ENCODE measurements at regions of chr16 and their contacts with region 1.

Region 1: DNA sequence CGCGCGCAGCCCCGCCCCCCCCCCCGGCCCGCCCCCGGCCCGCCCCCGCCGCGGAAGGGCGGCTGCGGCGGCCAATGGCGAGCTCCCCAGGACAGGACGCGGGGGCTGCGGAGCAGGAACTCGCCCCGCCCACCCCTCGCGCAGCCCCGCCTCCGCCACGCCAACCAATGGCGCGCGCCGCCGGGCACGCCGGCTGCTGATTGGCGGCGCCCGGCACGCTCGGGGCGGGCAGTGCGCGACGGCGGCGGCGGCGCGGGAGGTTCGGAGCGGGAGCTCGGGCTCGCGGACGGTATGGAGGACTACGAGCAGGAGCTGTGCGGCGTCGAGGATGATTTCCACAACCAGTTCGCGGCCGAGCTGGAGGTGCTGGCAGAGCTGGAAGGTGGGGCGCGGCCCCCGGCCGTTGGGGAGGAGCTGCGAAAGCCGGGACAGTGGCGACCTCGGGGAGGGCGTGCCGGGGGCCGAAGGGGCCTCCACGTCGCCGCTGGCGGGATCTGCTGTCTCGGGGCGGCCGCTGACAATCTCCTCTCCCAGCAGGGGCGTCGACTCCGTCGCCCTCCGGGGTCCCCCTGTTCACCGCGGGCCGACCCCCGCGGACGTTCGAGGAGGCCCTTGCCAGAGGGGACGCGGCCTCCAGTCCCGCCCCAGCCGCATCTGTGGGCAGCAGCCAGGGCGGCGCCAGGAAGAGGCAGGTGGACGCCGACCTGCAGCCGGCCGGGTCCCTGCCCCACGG is at the start of gene CHTF18:
- DNase-seq: peak; percentile 88 to 94
- H3K4me3 ChIP-seq: peak within 1 kb of the TSS; percentile 97
- H3K4me3 Mint-ChIP-seq: peak within 1 kb of the TSS; percentile 82
- H3K27ac Mint-ChIP-seq: no peak within 1 kb of the TSS
- H3K4me1 ChIP-seq: peaks cover 11% of the 10 kb centered on the region; the same call in 1 of the 2 replicates
- H3K4me1 Mint-ChIP-seq: no peaks in the 10 kb centered on the region
- H3K27me3 ChIP-seq: no peaks in the 10 kb centered on the region
- H3K27me3 Mint-ChIP-seq: no peaks in the 10 kb centered on the region
- CTCF ChIP-seq: no peak
- total RNA-seq, gene CHTF18: 97.6 and 102 TPM in 2 replicates

Region 2: DNA sequence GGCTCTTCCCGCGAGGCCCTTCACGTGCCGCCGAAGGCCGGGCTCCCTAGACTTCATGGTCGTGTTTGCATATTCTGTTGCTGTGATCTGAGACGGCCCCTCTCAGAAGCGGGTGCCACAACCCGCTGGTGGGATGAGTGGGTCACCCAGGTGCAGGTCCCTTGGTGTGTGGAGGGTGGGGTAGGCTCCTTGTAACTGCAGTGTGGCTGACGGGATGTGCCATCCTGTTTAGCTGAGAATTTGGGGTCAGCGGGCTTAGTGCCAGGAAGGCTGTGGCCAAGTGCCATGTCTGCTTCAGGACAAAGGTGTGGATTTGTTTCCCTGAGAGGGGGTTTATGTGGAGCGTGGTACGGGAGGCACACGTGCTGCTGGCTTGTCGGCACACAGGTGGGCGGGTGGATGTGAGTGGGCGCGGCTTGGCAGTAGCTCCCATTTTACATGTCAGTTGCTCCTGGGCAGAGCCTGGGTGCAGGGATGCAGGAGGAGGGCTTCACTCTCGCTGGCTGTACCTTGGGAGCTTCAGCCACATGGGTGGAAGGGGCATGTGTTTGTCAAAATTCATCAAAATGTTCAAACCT is 166.9 kb before region 1 on chr16:
- CTCF ChIA-PET with region 1: no interaction called
- POLR2A ChIA-PET with region 1: no interaction called
- intact Hi-C with region 1: no loop called
- DNase-seq: no peak
- H3K4me3 ChIP-seq: no peak overlapping the region
- H3K4me3 Mint-ChIP-seq: no peak overlapping the region
- H3K27ac Mint-ChIP-seq: no peak overlapping the region
- H3K4me1 ChIP-seq: no peaks in the 10 kb centered on the region
- H3K4me1 Mint-ChIP-seq: no peaks in the 10 kb centered on the region
- H3K27me3 ChIP-seq: no peaks in the 10 kb centered on the region
- H3K27me3 Mint-ChIP-seq: no peaks in the 10 kb centered on the region
- CTCF ChIP-seq: no peak

Region 3: GRCh38 chr16:636206-637080 is 152.1 kb before region 1 on chr16 and contains the start of gene METTL26:
- CTCF ChIA-PET with region 1: no interaction called
- POLR2A ChIA-PET with region 1: no interaction called
- intact Hi-C with region 1: no loop called
- DNase-seq: peak; percentile 92 to 95
- H3K4me3 ChIP-seq: peak within 1 kb of the TSS; percentile 73
- H3K4me3 Mint-ChIP-seq: peak within 1 kb of the TSS; percentile 93
- H3K27ac Mint-ChIP-seq: peak within 1 kb of the TSS; percentile 98
- H3K4me1 ChIP-seq: peaks cover 10% of the 10 kb centered on the region
- H3K4me1 Mint-ChIP-seq: no peaks in the 10 kb centered on the region
- H3K27me3 ChIP-seq: no peaks in the 10 kb centered on the region
- H3K27me3 Mint-ChIP-seq: no peaks in the 10 kb centered on the region
- CTCF ChIP-seq: peak in 1 of 2 experiments; percentile 3
- total RNA-seq, gene METTL26: 67.1 and 67.4 TPM in 2 replicates

Region 4: DNA sequence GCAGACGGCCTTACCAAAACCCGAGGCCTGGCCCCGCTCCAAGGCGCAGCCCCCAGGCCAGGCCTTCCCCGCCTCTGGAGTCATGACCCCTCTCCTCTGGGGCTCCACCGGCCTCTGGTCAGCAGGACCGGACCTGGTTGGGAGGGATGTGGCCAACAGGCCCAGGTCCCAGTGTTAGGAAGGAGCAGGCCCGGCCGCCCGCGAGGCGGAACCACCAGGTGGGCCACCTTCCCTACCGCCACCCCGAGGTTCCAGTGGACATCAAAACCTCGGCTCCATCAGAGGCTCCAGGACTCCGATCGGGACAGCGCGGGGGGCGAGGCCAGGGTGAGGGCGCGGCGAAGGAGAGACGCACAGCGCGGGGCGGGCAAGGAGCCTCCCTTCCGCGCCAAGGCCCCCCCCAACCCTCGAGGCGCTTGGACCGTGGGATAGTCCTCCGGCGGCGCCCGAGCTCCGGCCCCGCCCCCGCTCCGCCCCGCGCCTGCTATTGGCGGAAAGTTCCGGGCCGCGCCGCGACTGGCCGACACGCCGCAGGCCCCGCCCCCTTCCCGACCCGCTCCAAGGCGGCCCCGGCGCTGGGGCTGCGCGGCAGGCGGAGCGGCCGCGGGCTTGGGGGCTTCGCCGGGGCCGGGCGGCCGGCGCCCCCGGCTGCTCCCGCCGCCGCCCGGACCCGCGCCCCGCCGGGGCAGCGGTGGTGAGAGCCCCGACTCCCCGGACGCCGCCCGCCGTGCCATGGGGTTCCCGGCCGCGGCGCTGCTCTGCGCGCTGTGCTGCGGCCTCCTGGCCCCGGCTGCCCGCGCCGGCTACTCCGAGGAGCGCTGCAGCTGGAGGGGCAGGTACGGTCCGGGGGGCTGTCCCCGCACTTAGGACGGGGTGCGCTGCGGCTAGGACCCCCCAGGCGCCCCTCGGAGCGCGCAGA is 73.7 kb before region 1 on chr16 and contains the start of gene METRN:
- CTCF ChIA-PET with region 1: interaction called, 6 read pairs
- POLR2A ChIA-PET with region 1: interaction called, 12 read pairs
- intact Hi-C with region 1: loop called (anchors 10 kb)
- DNase-seq: peak; percentile 84 to 94
- H3K4me3 ChIP-seq: peak within 1 kb of the TSS; percentile 71
- H3K4me3 Mint-ChIP-seq: peak within 1 kb of the TSS; percentile 66
- H3K27ac Mint-ChIP-seq: no peak within 1 kb of the TSS
- H3K4me1 ChIP-seq: peaks cover 31% of the 10 kb centered on the region
- H3K4me1 Mint-ChIP-seq: peaks cover 7% of the 10 kb centered on the region
- H3K27me3 ChIP-seq: no peaks in the 10 kb centered on the region
- H3K27me3 Mint-ChIP-seq: no peaks in the 10 kb centered on the region
- CTCF ChIP-seq: no peak
- total RNA-seq, gene METRN: 20.0 and 23.4 TPM in 2 replicates

Region 5: DNA sequence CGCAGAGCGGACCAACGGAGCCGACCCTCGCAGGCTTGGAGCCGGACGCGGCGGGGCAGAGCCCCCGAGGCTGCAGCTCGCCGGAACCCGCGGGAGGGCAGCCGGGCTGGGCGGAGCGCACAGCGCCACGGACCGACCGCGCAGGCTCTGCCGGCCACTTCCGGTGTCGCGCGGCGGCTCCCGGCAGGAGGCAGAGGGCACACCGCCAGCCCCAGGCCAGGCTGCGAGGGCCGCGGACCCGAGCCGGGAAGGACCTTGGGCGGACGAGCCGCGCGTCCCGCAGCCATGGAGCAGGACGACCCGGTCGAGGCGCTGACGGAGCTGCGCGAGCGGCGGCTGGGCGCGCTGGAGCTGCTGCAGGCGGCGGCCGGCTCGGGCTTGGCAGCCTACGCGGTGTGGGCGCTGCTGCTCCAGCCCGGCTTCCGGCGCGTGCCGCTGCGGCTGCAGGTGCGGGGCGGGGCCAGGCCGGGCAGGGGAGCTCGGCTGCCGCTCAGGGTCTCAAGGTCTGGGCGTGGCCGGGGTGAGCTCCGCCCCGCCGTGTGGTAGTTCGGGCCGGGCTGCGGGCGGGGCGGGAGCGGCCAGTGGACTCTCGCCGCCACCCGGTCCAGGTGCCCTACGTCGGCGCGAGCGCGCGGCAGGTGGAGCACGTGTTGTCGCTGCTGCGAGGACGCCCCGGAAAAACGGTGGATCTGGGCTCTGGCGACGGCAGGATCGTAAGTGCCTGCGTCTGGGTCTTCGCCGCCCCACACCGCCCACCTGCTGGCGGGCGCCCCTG is 67.4 kb before region 1 on chr16 and contains the start of gene ANTKMT:
- CTCF ChIA-PET with region 1: interaction called, 6 read pairs
- POLR2A ChIA-PET with region 1: interaction called, 12 read pairs
- intact Hi-C with region 1: loop called (anchors 10 kb)
- DNase-seq: peak; percentile 89 to 95
- H3K4me3 ChIP-seq: peak within 1 kb of the TSS; percentile 86
- H3K4me3 Mint-ChIP-seq: peak within 1 kb of the TSS; percentile 73
- H3K27ac Mint-ChIP-seq: peak within 1 kb of the TSS; percentile 39
- H3K4me1 ChIP-seq: peaks cover 24% of the 10 kb centered on the region
- H3K4me1 Mint-ChIP-seq: no peaks in the 10 kb centered on the region
- H3K27me3 ChIP-seq: no peaks in the 10 kb centered on the region
- H3K27me3 Mint-ChIP-seq: no peaks in the 10 kb centered on the region
- CTCF ChIP-seq: no peak
- total RNA-seq, gene ANTKMT: 39.7 and 42.6 TPM in 2 replicates

Region 6: DNA sequence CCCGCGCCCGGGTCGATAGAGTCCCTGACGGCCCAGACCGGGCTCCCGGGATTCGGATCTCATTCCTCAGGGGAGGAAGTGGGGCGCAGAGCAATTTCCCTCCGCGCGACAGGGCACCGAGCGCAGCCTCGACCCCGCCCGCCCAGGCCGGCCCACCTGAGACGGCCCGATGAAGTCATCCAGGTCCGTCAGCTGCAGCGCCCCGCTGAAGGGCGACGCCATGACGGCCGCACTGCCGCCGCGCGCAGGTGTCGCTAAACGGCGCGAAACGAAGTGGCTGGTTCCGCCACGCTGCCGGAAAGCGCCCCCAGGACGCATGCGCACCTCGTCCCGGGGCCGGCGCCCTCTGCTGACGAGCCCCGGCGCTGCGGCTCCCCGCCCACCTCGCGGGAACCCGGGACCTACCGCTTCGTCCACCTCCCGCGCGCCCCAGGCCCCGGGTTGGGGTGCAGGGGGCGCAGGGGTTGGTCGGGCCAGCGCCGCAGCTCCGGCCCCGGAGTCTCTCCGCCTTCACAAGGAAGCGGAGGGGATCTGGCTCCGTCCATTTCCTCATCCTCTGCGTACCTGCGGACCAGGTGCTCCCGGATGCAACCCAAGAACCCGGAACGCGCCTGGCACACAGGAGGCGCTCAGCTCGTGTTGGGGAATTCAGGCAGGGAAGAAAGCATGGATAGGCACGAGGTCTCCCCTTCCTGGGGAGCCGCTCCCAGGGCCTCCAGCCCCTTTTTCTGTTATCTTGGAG is 47.6 kb before region 1 on chr16 and contains the start of gene CIAO3:
- CTCF ChIA-PET with region 1: interaction called, 6 read pairs
- POLR2A ChIA-PET with region 1: interaction called, 10 read pairs
- intact Hi-C with region 1: loop called (anchors 5 kb)
- DNase-seq: peak; percentile 88 to 94
- H3K4me3 ChIP-seq: peak within 1 kb of the TSS; percentile 69
- H3K4me3 Mint-ChIP-seq: peak within 1 kb of the TSS; percentile 71
- H3K27ac Mint-ChIP-seq: peak within 1 kb of the TSS; percentile 61
- H3K4me1 ChIP-seq: no peaks in the 10 kb centered on the region
- H3K4me1 Mint-ChIP-seq: no peaks in the 10 kb centered on the region
- H3K27me3 ChIP-seq: no peaks in the 10 kb centered on the region
- H3K27me3 Mint-ChIP-seq: no peaks in the 10 kb centered on the region
- CTCF ChIP-seq: peak; percentile 64 to 87
- total RNA-seq, gene CIAO3: 42.9 and 44.5 TPM in 2 replicates

Measured in Caco-2 (cell line).